ENCODE measurements at regions of chr2 and their contacts with region 1.

Region 1: DNA sequence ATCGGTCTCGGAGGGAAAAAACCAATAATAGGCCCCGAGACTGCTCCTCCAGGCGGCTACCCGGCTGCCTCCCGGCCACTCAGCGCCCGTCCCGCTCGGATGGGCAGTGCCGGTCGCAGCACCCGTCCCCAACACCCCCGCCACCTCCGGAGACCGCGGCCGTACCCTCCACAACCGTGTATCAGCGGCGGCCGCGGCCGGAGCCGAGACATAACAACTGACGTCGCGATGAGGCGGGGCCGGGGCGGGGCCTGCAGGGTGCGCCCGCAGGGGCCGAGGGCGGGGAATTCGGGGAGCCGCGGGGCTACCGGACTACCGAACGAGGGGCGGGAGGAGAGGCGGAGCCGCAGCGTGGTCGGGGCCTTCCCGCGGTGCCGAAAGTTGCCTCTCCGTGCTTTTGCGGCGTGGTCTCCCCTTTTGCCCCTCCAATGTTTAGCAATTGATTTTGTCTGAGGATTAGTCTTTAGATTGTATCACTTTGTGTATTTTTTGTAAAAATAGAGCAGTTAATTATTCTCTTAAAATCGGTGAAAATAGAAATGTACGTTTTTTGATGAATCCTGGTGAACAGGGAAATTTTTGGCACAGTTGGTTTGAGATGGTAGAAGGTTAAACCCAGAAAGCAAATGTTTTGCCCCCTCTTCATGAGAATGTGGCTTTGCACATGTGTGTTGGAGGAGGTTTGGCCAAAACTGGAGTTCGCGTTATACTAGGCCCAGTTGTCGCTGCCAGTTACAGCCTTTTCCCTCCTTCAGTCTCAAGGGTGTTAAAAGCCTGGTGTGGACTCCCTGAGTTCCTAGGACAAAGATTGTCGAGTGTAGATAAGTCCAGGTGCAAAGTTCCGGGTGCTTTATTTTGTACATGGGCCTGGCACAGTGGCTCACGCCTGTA is at the start of gene RNF103:
- DNase-seq: peak; percentile 92
- ATAC-seq: peak; percentile 83
- H3K4me3 ChIP-seq: peak within 1 kb of the TSS; percentile 83
- H3K27ac ChIP-seq: peak within 1 kb of the TSS; percentile 53
- H3K4me1 ChIP-seq: peaks cover 14% of the 10 kb centered on the region
- H3K27me3 ChIP-seq: no peaks in the 10 kb centered on the region
- CTCF ChIP-seq: no peak
- total RNA-seq, gene RNF103: 10.4 and 12.3 TPM in 2 replicates

Region 2: DNA sequence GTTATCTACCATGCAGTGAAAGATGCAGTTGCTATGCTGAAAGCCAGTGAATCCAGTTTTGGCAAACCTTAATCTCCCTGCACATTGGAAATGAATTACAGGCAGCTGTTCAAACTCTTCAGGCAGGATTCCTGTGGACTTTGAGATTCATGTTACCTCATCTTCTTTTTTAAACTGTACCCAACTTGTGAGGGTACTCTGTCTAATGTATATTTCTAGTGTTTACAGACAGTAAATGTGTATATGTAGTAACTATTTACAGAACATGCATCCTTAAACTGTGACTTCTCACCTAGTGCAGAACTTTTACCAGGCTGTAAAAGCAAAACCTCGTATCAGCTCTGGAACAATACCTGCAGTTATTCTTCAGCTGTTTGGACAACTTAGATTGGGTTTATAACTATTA is 131.8 kb before region 1 on chr2:
- CTCF ChIA-PET with region 1: no interaction called
- POLR2A ChIA-PET with region 1: no interaction called
- intact Hi-C with region 1: loop called (anchors 5 kb)
- DNase-seq: no peak
- ATAC-seq: peak; percentile 64
- H3K4me3 ChIP-seq: no peak overlapping the region
- H3K27ac ChIP-seq: no peak overlapping the region
- H3K4me1 ChIP-seq: no peaks in the 10 kb centered on the region
- H3K27me3 ChIP-seq: no peaks in the 10 kb centered on the region
- CTCF ChIP-seq: no peak

Region 3: DNA sequence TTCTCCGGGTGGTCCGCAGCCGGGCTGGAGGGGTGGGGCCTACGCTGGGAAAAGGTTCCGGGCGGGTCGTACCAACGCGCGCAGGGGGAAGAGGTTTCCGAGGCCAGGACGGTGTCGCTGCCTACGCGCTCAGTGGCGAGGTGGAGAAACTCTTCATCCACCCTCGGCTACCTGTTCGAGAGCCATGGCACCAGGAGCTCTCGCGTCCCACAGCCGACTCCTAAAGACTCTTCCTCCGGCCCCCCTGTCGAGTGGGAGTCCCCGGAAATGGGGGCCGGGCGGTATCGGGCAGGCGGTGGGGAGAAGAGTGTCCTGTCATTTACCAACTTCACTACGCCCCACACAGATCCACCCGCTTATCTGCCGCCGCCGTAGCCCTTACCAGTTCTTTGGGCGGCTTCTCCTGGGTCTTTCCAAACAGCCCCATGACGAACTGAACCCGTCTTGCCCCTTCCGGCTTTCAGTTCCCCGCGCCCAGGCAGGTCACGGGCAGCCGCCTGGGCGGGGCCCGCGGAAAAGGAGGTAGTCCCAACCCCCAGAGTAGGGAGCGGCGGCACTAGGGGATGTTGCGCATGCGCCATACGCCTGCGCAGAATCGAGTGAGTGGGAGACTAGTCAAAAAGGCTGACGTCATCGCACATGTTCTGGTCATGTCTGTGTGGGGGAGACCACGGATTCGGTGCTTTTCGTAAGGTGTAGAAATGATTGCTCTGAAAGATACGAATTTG is 60.8 kb before region 1 on chr2 and contains the start of gene CHMP3:
- CTCF ChIA-PET with region 1: no interaction called
- POLR2A ChIA-PET with region 1: no interaction called
- intact Hi-C with region 1: loop called (anchors 2 kb)
- DNase-seq: peak; percentile 98
- ATAC-seq: peak; percentile 84
- H3K4me3 ChIP-seq: peak within 1 kb of the TSS; percentile 89
- H3K27ac ChIP-seq: peak within 1 kb of the TSS; percentile 93
- H3K4me1 ChIP-seq: peaks cover 23% of the 10 kb centered on the region
- H3K27me3 ChIP-seq: no peaks in the 10 kb centered on the region
- CTCF ChIP-seq: no peak
- total RNA-seq, gene CHMP3: 54.4 and 96.1 TPM in 2 replicates

Region 4: DNA sequence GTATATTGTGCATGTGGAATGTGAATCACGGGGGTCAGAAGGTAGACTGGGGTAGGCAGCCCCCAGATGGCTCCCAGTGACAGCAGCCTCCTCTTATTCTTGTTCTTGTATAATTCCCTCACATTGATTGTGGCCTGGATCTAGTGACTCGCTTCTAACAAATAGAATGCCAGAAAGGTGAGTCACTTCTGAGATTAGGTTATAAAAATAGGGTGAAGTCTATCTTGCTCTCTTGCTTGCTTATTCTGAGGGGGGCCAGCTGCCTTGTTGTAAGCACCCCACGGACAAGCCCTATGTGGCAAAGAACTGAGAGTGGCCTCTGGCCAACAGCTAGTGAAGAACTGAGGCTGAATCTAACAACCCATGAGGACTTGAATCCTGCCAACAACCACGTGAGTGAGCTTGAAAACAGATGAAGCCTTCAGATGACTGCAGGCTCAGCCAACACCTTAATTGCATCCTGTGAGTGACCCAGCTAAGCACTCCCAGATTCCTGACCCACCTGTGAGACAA is 80.6 kb after region 1 on chr2:
- CTCF ChIA-PET with region 1: no interaction called
- POLR2A ChIA-PET with region 1: no interaction called
- intact Hi-C with region 1: loop called (anchors 2 kb)
- DNase-seq: peak; percentile 93
- ATAC-seq: peak; percentile 87
- H3K4me3 ChIP-seq: peak overlapping the region; percentile 58
- H3K27ac ChIP-seq: peak overlapping the region; percentile 80
- H3K4me1 ChIP-seq: peaks cover 27% of the 10 kb centered on the region
- H3K27me3 ChIP-seq: no peaks in the 10 kb centered on the region
- CTCF ChIP-seq: no peak